K562 (cell line): ENCODE measurements at regions of chr19 and their contacts with region 1.

Region 1: DNA sequence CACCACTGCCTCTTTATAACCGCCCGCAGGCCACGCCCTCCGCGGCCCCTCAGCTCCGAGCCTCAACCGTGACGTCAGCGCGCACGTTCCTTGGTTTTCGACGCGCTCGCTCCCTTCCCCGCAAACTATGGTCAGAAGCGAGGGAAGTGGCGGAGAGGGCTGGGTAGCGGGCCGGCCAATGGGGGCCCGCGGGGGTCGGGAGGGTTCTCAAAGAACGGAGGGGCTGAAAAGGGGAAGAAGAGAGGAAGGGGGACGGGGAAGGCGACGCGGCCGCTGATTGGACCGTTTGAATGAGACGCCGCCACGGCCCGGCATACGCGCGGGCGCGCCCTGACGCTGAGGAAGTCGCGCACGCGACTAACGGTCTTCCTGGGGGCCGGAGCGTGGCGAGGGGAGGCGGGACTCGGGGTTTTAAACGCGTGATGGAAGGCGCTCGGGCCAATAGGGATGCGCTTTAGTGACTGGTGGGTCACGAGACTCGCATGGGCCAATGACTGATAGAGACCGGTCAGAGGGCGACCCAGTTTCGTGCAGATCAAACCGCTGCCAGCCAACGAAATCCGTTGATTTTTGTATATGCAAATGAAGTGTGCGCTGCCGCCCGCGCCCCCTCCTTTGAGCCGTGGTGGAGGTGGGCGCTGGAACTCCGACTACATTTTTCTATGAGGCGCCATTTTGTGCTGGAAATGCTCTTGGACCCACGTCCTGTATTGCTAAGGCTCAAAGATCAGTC is 378 bp upstream of the UBE2S start:
- DNase-seq: peak; percentile 97 to 100 (median 98)
- ATAC-seq: peak; percentile 97
- H3K4me3 ChIP-seq: peak overlapping the region; percentile 98
- H3K27ac ChIP-seq: peak overlapping the region; percentile 100
- H3K4me1 ChIP-seq: peaks cover 19 to 38% of the 10 kb centered on the region in 2 experiments
- H3K27me3 ChIP-seq: no peaks in the 10 kb centered on the region
- CTCF ChIP-seq: no peak
- EP300 ChIP-seq: peak; percentile 30
- POLR2A ChIP-seq: peak; percentile 59; the same call in 1 of the 2 replicates
- RAD21 ChIP-seq: no peak

Region 2: DNA sequence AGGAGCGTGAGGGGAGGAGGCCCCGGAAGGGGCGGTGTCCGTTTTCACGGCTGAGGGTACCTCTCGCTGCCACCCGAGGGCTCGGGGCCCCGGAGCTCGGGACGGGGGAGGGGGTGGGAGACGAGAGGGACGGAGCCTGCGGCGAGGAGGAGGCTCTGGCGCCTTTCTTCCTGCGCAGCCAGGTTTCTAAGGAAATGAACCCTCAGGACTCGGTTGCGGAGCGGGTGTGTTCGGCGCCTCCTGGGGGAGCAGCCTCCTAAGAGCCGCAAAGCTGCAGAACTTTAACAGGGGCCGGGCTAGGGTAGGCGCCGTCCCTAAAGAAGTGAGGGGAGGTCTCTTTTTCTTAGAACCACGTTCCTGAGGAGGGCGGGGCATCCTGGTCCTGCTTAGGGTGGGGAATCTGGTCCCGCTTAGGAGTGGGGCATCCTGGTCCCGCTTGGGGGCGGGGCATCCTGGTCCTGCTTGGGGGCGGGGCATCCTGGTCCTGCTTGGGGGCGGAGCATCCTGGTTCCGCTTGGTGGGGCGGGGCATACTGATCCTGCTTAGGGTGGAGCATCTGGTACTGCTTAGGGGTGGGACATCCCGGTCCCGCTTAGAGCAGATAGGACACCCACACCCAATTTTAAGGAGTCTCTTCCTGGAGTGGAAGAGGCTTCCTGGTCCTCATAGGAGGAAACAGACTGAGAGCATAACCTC is 234.1 kb before region 1 on chr19:
- CTCF ChIA-PET with region 1: no interaction called
- POLR2A ChIA-PET with region 1: interaction called, 19 read pairs
- in situ Hi-C with region 1: no loop called
- intact Hi-C with region 1: no loop called
- DNase-seq: peak; percentile 90 to 94 (median 92)
- ATAC-seq: peak; percentile 84
- H3K4me3 ChIP-seq: peak overlapping the region; percentile 60
- H3K27ac ChIP-seq: peak overlapping the region; percentile 75
- H3K4me1 ChIP-seq: peaks cover 27 to 41% of the 10 kb centered on the region in 2 experiments; a peak in 4 of 5 replicates
- H3K27me3 ChIP-seq: no peaks in the 10 kb centered on the region
- CTCF ChIP-seq: peak in 2 of 3 experiments; percentile 11 to 43; a peak in 2 of 6 replicates
- EP300 ChIP-seq: no peak
- POLR2A ChIP-seq: no peak
- RAD21 ChIP-seq: no peak

Region 3: GRCh38 chr19:55189424-55189823 is 218.5 kb before region 1 on chr19:
- CTCF ChIA-PET with region 1: no interaction called
- POLR2A ChIA-PET with region 1: no interaction called
- in situ Hi-C with region 1: no loop called
- intact Hi-C with region 1: no loop called
- DNase-seq: no peak
- ATAC-seq: peak; percentile 15; the same call in 1 of the 3 replicates
- H3K4me3 ChIP-seq: no peak overlapping the region
- H3K27ac ChIP-seq: no peak overlapping the region
- H3K4me1 ChIP-seq: peaks cover 0 to 12% of the 10 kb centered on the region in 2 experiments; a peak in 1 of 5 replicates
- H3K27me3 ChIP-seq: no peaks in the 10 kb centered on the region
- CTCF ChIP-seq: no peak
- EP300 ChIP-seq: no peak
- POLR2A ChIP-seq: no peak
- RAD21 ChIP-seq: no peak

Region 4: DNA sequence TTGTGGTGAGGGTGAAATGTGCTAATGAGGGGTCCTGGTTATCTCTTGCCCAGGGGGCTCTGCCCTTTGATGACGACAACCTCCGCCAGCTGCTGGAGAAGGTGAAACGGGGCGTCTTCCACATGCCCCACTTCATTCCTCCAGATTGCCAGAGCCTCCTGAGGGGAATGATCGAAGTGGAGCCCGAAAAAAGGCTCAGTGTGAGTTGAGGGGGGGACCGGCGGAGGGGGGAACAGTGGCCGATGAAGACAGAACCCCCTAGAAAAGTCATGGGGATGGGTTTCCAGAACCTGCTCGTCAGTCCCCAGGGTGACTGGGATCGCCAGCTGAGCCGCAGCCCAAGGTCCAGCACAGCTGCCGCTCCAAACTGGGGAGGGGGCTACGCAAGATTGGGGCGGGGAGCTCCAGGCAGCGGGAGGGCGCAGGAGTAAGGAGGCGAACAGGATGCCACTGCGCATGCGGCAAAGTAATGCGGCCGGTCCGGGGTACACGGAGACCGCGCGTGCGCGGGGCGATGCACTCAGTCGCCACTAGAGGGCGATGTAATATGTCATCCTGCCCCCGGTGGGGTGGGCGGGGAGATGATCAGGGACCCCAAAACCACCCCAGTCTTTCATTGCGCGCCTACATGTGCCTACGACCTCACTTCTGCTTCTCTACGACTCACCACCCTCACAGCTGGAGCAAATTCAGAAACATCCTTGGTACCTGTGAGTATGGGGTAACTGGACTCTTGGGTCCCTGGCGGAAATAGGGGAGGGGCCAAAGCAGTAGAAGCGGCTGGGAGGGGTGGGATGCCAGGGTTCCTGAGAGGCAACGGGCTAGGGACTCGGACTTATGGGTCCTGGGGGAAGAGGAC is 106.3 kb before region 1 on chr19:
- CTCF ChIA-PET with region 1: no interaction called
- POLR2A ChIA-PET with region 1: interaction called, 11 read pairs
- in situ Hi-C with region 1: no loop called
- intact Hi-C with region 1: no loop called
- DNase-seq: peak; percentile 94 to 99 (median 99)
- ATAC-seq: peak; percentile 83
- H3K4me3 ChIP-seq: peak overlapping the region; percentile 41
- H3K27ac ChIP-seq: peak overlapping the region; percentile 50
- H3K4me1 ChIP-seq: peaks cover 17 to 57% of the 10 kb centered on the region in 2 experiments; a peak in 4 of 5 replicates
- H3K27me3 ChIP-seq: no peaks in the 10 kb centered on the region
- CTCF ChIP-seq: peak; percentile 86 to 93 (median 90)
- EP300 ChIP-seq: no peak
- POLR2A ChIP-seq: peak; percentile 61
- RAD21 ChIP-seq: peak; percentile 43 to 67

Region 5: GRCh38 chr19:55312621-55313512 is 95.1 kb before region 1 on chr19:
- CTCF ChIA-PET with region 1: no interaction called
- POLR2A ChIA-PET with region 1: no interaction called
- in situ Hi-C with region 1: no loop called
- intact Hi-C with region 1: no loop called
- DNase-seq: no peak
- ATAC-seq: peak; percentile 12; the same call in 2 of the 3 replicates
- H3K4me3 ChIP-seq: no peak overlapping the region
- H3K27ac ChIP-seq: no peak overlapping the region
- H3K4me1 ChIP-seq: peaks cover 9 to 36% of the 10 kb centered on the region in 2 experiments; a peak in 4 of 5 replicates
- H3K27me3 ChIP-seq: no peaks in the 10 kb centered on the region
- CTCF ChIP-seq: no peak
- EP300 ChIP-seq: no peak
- POLR2A ChIP-seq: no peak
- RAD21 ChIP-seq: no peak

Region 6: GRCh38 chr19:55418185-55418584 is 10.2 kb after region 1 on chr19:
- CTCF ChIA-PET with region 1: no interaction called
- POLR2A ChIA-PET with region 1: interaction called, 14 read pairs
- in situ Hi-C with region 1: no loop called
- intact Hi-C with region 1: no loop called
- DNase-seq: peak; percentile 59 to 80 (median 70)
- ATAC-seq: peak; percentile 96
- H3K4me3 ChIP-seq: no peak overlapping the region
- H3K27ac ChIP-seq: no peak overlapping the region; the same call in 2 of the 3 replicates
- H3K4me1 ChIP-seq: peaks cover 4 to 10% of the 10 kb centered on the region in 2 experiments; a peak in 3 of 5 replicates
- H3K27me3 ChIP-seq: no peaks in the 10 kb centered on the region
- CTCF ChIP-seq: peak; percentile 76 to 92 (median 82)
- EP300 ChIP-seq: no peak
- POLR2A ChIP-seq: no peak
- RAD21 ChIP-seq: peak; percentile 81 to 91

Region 7: DNA sequence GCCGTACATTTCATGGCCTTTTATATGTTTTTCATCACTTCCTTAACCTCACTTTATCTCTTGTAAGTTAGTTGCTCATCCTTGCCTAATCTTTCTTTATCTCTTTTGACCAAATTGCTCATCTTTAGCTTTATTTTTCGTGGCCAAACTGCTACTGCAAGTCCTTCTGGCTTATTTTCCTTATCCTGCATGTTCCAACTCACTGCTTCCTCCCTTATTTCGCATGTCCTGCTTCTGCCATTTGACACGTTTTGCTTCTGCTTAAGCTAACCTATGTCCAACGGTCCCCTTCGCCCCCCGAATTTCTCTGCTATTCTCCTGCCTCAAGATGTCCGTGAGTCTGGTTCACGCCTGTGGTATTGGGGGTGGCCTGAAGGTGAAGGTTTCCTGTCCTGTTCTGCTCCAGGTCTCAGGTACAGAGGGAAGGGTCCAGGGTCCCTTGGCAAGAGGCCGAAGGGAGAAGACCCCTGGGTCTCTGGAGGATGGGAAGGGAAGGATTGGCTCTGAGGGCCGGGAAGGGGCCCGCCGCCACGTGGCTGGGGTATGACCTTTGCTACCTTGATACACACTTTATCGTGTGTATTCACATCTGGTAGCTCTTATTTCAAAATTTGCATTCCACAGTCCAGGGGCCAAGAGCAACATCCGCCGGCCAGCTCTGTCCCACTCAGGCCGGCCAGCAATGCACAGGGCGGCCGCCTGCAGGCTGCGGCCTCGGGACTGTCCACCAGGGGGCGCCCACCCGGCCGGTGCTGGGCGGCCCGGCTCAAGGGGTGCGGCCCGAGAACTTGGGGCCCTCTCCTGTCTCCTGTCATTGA is 59.5 kb after region 1 on chr19:
- CTCF ChIA-PET with region 1: no interaction called
- POLR2A ChIA-PET with region 1: interaction called, 12 read pairs
- in situ Hi-C with region 1: no loop called
- intact Hi-C with region 1: no loop called
- DNase-seq: peak; percentile 77 to 86 (median 83)
- ATAC-seq: peak; percentile 97
- H3K4me3 ChIP-seq: no peak overlapping the region
- H3K27ac ChIP-seq: peak overlapping the region; percentile 91
- H3K4me1 ChIP-seq: peaks cover 23 to 58% of the 10 kb centered on the region in 2 experiments; a peak in 4 of 5 replicates
- H3K27me3 ChIP-seq: no peaks in the 10 kb centered on the region
- CTCF ChIP-seq: peak; percentile 93 to 99 (median 95)
- EP300 ChIP-seq: peak; percentile 91
- POLR2A ChIP-seq: no peak; the same call in 1 of the 2 replicates
- RAD21 ChIP-seq: peak; percentile 55 to 72

Region 8: DNA sequence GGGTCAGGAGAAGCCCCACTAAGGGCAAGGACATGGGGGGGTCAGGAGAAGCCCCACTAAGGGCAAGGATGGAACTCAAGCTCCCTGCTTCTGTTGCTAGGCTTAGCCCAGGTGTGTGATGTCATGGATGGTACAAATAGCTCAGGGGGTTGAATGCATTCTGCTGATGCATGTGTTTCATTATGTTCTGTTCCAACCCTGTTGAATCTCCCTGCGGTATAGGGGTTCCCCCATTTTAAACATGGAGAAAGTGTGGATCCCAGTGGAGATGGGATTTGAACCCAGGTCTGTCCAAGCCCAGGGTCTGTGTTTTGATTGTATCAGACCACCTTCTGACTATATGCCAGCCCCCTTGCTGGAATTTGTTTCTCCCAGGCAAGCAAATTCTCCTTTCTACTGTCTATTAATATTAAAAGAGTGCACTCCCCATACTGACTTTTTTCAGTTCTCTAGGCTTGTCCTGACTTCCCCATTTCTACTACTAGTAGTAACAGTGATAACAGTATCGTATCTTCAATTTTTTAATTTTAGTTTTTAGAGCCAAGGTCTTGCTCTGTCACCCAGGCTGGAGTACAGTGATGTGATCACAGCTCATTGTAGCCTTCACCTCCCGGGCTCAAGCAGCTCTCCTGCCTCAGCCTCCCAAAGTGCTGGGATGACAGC is 204.1 kb after region 1 on chr19:
- CTCF ChIA-PET with region 1: no interaction called
- POLR2A ChIA-PET with region 1: no interaction called
- in situ Hi-C with region 1: no loop called
- intact Hi-C with region 1: no loop called
- DNase-seq: no peak
- ATAC-seq: no peak
- H3K4me3 ChIP-seq: no peak overlapping the region
- H3K27ac ChIP-seq: no peak overlapping the region
- H3K4me1 ChIP-seq: peaks cover 0 to 5% of the 10 kb centered on the region in 2 experiments; a peak in 2 of 5 replicates
- H3K27me3 ChIP-seq: no peaks in the 10 kb centered on the region
- CTCF ChIP-seq: no peak
- EP300 ChIP-seq: no peak
- POLR2A ChIP-seq: no peak
- RAD21 ChIP-seq: no peak